Heart left ventricle (tissue), 16 donors: ENCODE measurements at regions of chr17 and their contacts with region 1.

Region 1: DNA sequence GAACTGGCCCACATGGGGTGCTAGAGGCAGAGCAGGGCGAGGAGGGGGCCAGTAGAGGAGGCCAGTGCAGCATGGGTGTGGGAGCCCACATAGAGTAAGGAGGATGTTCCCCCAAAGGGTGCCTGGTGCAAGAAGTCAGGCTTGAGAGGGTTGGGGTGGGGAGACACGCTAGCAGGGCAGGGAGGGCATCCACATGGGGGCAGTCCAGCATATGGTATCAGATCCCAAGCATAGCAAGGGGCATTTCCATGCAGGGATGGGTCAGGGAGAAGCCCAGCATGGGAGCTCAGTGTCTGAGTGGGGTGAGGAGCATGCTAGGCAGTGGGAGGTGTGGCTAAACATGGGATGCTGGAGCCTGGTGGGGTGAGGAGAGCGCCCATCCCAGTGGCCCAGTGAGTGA is 213.7 kb downstream of the COPRS start:
- DNase-seq: no peak
- ATAC-seq: no peak
- H3K4me3 ChIP-seq: no peak overlapping the region
- H3K27ac ChIP-seq: no peak overlapping the region
- H3K4me1 ChIP-seq: no peaks in the 10 kb centered on the region
- H3K27me3 ChIP-seq: no peaks in the 10 kb centered on the region
- CTCF ChIP-seq: peak in 1 of 12 donors; percentile 10
- POLR2A ChIP-seq: no peak

Region 2: DNA sequence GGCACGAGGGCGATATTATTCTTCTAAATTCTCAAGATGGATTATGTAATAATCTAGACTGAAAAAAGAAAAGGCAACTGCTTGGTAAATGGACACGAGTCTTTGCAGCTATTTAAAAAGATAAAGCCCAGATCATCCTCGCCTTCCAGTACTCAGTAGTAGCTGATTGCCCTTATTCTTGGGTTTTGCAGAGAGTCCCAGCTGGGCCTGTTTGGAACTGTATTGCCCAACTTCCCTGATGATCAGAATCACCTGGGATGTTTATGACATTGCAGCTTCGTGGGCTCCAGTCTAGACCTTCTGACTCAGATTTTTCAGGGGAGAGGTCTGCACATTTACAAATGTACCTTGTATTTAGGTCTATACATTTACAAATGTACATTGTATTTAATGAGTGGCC is 40.4 kb before region 1 on chr17:
- intact Hi-C with region 1: loop called in 1 of 10 experiments (anchors 5 kb)
- DNase-seq: no peak
- ATAC-seq: no peak
- H3K4me3 ChIP-seq: no peak overlapping the region
- H3K27ac ChIP-seq: no peak overlapping the region
- H3K4me1 ChIP-seq: no peaks in the 10 kb centered on the region
- H3K27me3 ChIP-seq: no peaks in the 10 kb centered on the region
- CTCF ChIP-seq: no peak
- POLR2A ChIP-seq: no peak

Region 3: DNA sequence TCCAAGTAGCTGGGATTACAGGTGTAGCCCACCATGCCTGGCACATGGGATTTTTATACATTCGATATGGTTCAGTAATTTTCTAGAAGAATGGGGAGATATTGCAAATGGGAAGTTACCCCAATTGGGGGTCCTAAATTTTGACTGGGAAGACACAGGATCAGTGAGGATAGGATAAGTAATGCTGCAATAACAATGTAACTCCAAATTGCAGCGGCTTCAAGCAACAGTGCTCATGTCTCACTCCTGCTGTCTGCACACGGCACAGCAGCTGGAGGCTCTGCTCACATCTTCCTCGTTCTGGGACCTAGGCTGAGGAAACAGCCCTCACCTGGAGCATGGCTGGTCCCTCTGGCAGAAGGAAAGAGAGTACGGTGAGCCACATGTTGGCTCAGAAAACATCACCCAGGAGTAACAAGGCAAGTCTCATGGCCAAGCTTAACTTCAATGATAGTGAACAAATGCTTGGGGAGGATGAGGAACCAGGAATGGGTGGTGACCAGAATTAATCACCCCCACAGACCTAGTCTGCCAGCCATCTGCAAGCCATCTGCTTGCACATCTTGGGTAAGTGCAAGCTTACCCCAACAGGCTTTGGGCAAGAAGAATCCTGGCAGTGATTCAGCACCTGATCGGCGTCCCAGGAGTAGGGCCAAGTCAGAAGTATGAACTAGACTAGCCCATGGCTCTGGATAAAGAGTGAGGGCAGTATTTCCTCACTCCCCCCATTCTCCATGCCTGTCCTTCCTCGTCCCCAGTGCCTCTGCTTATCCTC is 15.5 kb before region 1 on chr17:
- intact Hi-C with region 1: no loop called
- DNase-seq: no peak
- ATAC-seq: no peak
- H3K4me3 ChIP-seq: no peak overlapping the region
- H3K27ac ChIP-seq: no peak overlapping the region
- H3K4me1 ChIP-seq: no peaks in the 10 kb centered on the region
- H3K27me3 ChIP-seq: no peaks in the 10 kb centered on the region
- CTCF ChIP-seq: no peak
- POLR2A ChIP-seq: no peak

Region 4: DNA sequence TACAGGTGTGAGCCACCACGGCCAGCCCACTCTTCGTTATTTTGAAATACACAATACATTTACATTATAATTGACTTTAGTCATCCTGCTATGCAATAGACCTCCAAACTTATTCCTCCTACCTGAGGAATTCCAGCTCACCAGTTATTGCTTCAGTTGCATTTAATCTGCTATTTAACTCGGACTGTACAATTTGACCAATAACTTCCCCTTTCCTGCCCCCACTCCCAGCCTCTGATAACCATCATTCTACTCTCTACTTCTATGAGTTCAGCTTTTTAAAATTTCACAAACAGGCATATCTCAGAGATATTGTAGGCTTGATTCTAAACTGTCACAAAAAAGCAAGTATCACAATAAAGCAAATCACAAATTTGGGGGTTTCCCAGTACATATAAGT is 56.7 kb after region 1 on chr17:
- intact Hi-C with region 1: loop called in 1 of 10 experiments (anchors 10 kb)
- DNase-seq: no peak
- ATAC-seq: no peak
- H3K4me3 ChIP-seq: no peak overlapping the region
- H3K27ac ChIP-seq: no peak overlapping the region
- H3K4me1 ChIP-seq: peaks cover 0 to 6% (median 3%) of the 10 kb centered on the region in 12 donors
- H3K27me3 ChIP-seq: no peaks in the 10 kb centered on the region
- CTCF ChIP-seq: no peak
- POLR2A ChIP-seq: no peak